ENCODE measurements at regions of chr22 and their contacts with region 1.

Region 1: DNA sequence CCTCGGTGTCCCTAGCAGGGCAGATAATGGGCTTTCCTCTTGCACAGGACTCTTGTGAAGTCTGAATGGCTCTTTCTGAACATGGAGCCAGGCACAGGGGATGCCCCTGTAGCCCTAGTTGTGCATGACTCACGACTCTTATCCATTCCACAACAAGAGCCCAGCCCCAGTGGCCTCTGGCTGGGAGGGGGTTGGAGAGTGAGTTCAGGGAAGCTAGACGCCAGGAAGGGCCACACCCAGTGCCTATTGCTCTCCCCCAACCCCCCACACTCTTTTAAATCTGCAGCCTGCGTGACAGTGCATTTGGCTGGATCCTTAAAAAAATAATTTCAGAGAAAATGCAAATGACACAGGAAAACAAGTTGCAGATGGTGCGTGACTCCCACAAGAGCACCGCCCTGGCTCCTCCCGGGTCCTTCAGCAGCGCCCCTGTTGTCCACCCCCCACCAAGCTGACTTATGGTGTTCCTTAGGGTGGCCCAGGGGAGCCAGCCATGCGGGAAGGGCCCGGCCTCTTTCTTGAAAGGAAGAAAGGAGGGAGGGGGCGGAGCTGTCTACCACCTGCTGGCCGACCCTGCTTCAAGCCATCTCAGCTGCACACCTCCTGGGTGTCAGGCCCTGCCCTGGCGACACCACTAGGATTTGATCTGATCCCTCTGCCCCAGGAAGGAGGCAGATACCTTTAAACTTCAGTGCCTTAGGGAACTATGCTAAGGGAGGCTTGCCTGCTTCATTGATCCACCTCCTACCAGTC is 74.7 kb downstream of the MN1 start:
- DNase-seq: peak; percentile 86
- ATAC-seq: peak; percentile 93

Region 2: GRCh38 chr22:27668828-27669797 is 57.8 kb before region 1 on chr22:
- intact Hi-C with region 1: loop called (anchors 1 kb)
- DNase-seq: peak; percentile 88
- ATAC-seq: peak; percentile 88

Region 3: DNA sequence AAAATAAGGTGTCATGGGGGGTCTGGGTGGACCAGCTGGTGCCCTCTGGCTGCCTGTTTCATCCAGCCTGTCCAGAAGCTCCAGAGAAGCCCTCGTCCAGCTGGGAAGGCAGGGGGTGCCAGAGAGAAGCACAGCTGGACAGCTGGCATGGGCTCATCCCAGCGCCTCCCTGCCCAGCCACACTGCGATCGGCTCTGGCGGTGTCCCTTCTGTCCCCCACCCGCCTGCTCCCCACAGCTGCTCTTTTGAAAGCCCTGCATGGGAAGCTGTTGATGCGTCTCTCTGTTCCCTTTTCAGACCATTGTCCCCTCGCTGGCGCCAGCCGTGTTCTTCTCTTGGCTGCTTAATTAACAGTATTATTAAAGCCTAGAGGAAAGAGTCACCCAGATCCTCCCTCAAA is 11.8 kb before region 1 on chr22:
- intact Hi-C with region 1: no loop called
- DNase-seq: no peak
- ATAC-seq: no peak

Region 4: DNA sequence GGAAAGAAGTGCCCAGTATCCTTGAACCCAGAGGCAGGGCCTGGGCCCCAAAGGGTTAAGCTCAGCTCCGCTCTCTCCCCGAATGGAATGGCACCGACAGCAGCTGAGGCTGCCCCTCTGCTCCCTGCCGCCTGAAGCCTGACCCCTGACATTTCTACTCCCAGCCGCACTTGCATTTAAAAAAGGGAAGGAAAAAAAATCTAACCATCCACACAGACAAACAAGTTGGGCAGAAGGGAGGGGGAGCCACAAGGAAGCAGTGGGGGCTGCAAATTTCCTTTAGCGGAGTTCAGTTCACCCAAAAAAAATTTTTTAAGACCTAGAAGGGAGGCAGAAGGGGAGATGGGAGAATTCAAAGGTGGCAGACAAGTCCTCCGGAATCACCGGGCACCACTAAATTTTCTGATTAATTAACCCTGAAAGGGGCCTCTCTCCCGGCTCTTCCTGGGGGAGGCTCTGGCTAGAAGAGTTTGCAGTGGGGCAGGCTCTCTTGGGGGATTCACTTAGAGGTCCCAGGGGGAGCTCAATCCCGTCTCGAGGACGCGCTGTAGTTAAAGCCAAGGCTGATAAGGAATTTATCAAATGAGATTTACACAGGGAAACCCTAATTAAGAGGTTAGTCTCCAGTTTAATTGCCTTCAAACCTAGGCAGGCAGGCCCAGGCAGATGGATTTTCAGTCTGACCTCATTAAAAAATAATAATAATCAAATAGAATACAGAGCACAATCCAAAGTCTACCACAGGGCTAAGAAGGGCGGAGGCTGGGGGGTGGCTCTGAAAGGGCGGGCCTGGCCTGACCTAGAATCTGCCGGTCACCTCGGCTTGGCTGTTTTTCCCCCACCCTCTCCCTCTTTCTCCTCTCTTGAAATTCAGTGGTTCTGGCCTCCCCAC is 49.1 kb after region 1 on chr22:
- intact Hi-C with region 1: loop called (anchors 2 kb)
- DNase-seq: no peak
- ATAC-seq: peak; percentile 59

Measured in Right ventricle myocardium inferior (tissue), 1 donor.